Activated naive CD4-positive, alpha-beta T cell treated with anti-CD3 and anti-CD28 coated beads for 36 hours (primary cell): ENCODE measurements at regions of chr9 and their contacts with region 1.

Region 1: GRCh38 chr9:91036826-91037510 is 235.3 kb downstream of the SYK start:
- DNase-seq: peak; percentile 87
- H3K4me3 Mint-ChIP-seq: peak overlapping the region; percentile 42
- H3K27ac Mint-ChIP-seq: no peak overlapping the region
- H3K4me1 Mint-ChIP-seq: peaks cover 27% of the 10 kb centered on the region
- H3K27me3 Mint-ChIP-seq: peaks cover 36% of the 10 kb centered on the region

Region 2: GRCh38 chr9:90914868-90915483 is 122.0 kb before region 1 on chr9:
- CTCF ChIA-PET with region 1: interaction called, 17 read pairs
- intact Hi-C with region 1: loop called (anchors 1 kb)
- DNase-seq: peak; percentile 82
- H3K4me3 Mint-ChIP-seq: no peak overlapping the region
- H3K27ac Mint-ChIP-seq: no peak overlapping the region
- H3K4me1 Mint-ChIP-seq: no peaks in the 10 kb centered on the region
- H3K27me3 Mint-ChIP-seq: no peaks in the 10 kb centered on the region

Region 3: GRCh38 chr9:91391412-91391811 is 354.4 kb after region 1 on chr9:
- CTCF ChIA-PET with region 1: no interaction called
- intact Hi-C with region 1: no loop called
- DNase-seq: no peak
- H3K4me3 Mint-ChIP-seq: no peak overlapping the region
- H3K27ac Mint-ChIP-seq: no peak overlapping the region
- H3K4me1 Mint-ChIP-seq: peaks cover 11% of the 10 kb centered on the region
- H3K27me3 Mint-ChIP-seq: peaks cover 4% of the 10 kb centered on the region

Region 4: DNA sequence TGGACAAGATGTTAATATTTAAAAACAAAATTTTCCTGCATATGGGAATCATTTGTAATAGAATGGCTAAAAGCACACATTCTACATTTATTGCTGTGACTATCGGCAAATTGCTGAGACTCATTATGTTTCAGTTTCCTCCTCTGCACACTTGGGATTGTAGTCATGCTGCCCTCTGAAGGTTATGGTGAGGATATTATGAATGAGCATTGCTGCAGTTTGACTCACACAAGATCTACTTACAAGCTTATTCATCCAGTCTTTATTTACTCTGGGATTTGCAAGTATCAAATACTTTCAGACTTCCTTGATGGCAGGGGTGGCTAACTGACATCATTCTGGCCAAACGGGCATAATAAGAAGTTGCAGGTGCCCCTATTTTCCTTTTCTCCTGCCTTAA is 396.2 kb after region 1 on chr9:
- CTCF ChIA-PET with region 1: interaction called, 17 read pairs
- intact Hi-C with region 1: no loop called
- DNase-seq: peak; percentile 34
- H3K4me3 Mint-ChIP-seq: no peak overlapping the region
- H3K27ac Mint-ChIP-seq: no peak overlapping the region
- H3K4me1 Mint-ChIP-seq: peaks cover 3% of the 10 kb centered on the region
- H3K27me3 Mint-ChIP-seq: peaks cover 12% of the 10 kb centered on the region

Region 5: DNA sequence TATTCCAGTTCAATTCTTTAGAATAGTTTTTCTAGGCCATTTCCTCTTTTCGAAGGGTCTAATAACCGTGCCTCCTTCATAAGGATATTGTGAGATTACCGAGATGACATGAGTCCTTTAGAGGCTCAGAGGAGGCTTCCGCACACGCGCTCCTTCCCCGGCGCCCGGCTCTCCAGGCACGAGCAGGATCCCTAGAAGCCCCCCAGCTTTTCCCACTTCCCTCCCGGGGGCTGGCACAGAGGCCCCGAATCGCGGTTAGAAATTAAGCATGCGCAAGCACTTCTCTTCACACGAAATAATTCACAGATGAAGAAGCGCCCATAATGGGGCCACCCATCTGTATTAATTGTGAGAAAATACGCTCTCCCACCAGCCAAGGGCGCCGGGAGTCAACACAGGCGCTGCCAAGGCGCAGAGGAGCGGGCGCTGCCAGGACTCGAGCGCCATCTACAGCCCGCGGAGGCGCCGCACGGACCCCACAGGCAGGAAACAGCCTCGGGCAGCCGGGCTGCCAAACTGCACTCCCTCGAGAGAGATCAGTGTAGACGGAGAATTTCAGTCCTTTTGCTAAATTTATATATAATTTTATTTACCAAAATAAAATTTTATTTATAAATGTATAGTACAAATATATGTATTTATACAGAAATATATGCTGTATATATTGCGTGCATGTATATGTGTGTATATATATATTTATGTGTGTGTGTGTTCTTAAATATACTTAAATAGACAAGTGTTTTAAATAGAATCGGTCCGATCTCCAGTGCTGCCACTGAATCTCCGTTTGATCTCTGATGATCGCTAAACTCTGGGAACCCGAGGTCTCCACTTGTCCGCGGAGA is 644.7 kb after region 1 on chr9:
- CTCF ChIA-PET with region 1: interaction called, 3 read pairs
- intact Hi-C with region 1: loop called (anchors 2 kb)
- DNase-seq: peak; percentile 82
- H3K4me3 Mint-ChIP-seq: no peak overlapping the region
- H3K27ac Mint-ChIP-seq: no peak overlapping the region
- H3K4me1 Mint-ChIP-seq: peaks cover 4% of the 10 kb centered on the region
- H3K27me3 Mint-ChIP-seq: peaks cover 32% of the 10 kb centered on the region

Region 6: GRCh38 chr9:91727316-91727861 is 690.4 kb after region 1 on chr9:
- CTCF ChIA-PET with region 1: no interaction called
- intact Hi-C with region 1: loop called (anchors 5 kb)
- DNase-seq: peak; percentile 49
- H3K4me3 Mint-ChIP-seq: no peak overlapping the region
- H3K27ac Mint-ChIP-seq: no peak overlapping the region
- H3K4me1 Mint-ChIP-seq: no peaks in the 10 kb centered on the region
- H3K27me3 Mint-ChIP-seq: peaks cover 2% of the 10 kb centered on the region

Region 7: DNA sequence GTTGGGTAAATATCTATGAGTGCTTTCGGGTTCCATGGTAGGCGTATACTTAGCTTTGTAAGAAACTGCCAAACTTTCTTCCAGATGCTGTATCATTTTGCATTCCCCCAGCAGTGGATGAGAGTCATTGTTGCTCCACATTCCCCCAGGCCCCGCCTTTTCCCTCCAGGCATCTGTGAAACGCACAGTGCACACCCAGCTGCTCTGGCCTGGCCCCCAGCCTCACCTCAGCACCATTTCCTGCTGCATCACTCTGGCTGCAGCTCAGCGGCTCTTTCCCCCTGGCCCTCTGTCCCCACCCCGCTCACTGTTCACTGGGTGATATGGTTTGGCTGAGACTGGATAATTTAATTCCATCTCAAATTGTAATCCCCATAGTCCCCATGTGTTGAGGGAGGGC is 1154.8 kb after region 1 on chr9:
- CTCF ChIA-PET with region 1: no interaction called
- intact Hi-C with region 1: loop called (anchors 5 kb)
- DNase-seq: no peak
- H3K4me3 Mint-ChIP-seq: no peak overlapping the region
- H3K27ac Mint-ChIP-seq: no peak overlapping the region
- H3K4me1 Mint-ChIP-seq: no peaks in the 10 kb centered on the region
- H3K27me3 Mint-ChIP-seq: peaks cover 2% of the 10 kb centered on the region